Activated naive CD4-positive, alpha-beta T cell treated with anti-CD3 and anti-CD28 coated beads for 36 hours (primary cell): ENCODE measurements at regions of chr5 and their contacts with region 1.

Region 1: GRCh38 chr5:59238126-59238902 is 655.2 kb downstream of the PDE4D start:
- DNase-seq: peak; percentile 35
- H3K4me3 Mint-ChIP-seq: no peak overlapping the region
- H3K27ac Mint-ChIP-seq: no peak overlapping the region
- H3K4me1 Mint-ChIP-seq: peaks cover 22% of the 10 kb centered on the region
- H3K27me3 Mint-ChIP-seq: peaks cover 38% of the 10 kb centered on the region

Region 2: GRCh38 chr5:57327561-57328394 is 1910.5 kb before region 1 on chr5:
- CTCF ChIA-PET with region 1: no interaction called
- intact Hi-C with region 1: loop called (anchors 5 kb)
- DNase-seq: peak; percentile 6
- H3K4me3 Mint-ChIP-seq: no peak overlapping the region
- H3K27ac Mint-ChIP-seq: no peak overlapping the region
- H3K4me1 Mint-ChIP-seq: peaks cover 23% of the 10 kb centered on the region
- H3K27me3 Mint-ChIP-seq: no peaks in the 10 kb centered on the region

Region 3: GRCh38 chr5:58972301-58972700 is 266.0 kb before region 1 on chr5:
- CTCF ChIA-PET with region 1: no interaction called
- intact Hi-C with region 1: loop called (anchors 1 kb)
- DNase-seq: no peak
- H3K4me3 Mint-ChIP-seq: no peak overlapping the region
- H3K27ac Mint-ChIP-seq: no peak overlapping the region
- H3K4me1 Mint-ChIP-seq: peaks cover 15% of the 10 kb centered on the region
- H3K27me3 Mint-ChIP-seq: no peaks in the 10 kb centered on the region

Region 4: DNA sequence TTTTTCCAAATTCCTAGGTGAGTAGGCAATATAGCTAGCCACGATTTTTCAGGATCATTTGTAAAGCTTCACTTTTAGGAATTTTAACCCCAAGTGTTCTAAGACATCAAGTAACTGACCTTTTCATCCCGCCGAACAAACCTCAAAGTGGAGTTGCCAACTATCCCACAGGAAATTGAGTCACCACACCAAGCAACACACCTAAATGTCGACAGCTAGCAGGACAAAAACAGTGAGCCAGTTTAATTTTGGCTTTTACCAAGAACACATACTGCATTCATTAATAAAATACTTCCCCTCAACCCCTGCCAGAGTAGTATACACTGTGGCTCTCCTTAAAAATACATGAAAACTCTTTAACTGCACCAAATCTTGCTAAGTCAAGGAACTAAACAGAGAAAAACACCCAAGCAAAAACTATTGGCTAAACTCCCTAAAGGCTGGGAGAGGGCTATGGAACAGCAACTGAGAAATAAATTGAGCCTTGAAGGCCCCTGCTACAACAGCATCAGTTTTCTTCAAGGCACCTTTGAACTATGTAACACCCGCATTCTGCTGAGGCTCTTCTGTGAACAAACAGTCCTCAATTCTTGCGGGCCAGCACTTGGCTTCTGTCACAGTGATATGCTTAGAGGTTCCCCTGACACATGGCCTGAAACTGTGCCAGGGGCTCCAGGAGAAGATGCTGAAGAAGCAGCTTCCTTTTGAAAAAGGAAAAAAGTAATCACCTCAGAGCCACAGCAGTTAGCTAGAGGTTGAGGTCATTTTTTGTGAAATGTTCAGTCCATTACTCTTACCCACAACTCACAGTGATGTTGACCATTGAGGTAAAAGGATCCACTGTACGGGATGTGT is 195.9 kb before region 1 on chr5:
- CTCF ChIA-PET with region 1: no interaction called
- intact Hi-C with region 1: no loop called
- DNase-seq: peak; percentile 19
- H3K4me3 Mint-ChIP-seq: no peak overlapping the region
- H3K27ac Mint-ChIP-seq: peak overlapping the region; percentile 1
- H3K4me1 Mint-ChIP-seq: peaks cover 27% of the 10 kb centered on the region
- H3K27me3 Mint-ChIP-seq: no peaks in the 10 kb centered on the region

Region 5: GRCh38 chr5:59099270-59099994 is 138.9 kb before region 1 on chr5:
- CTCF ChIA-PET with region 1: no interaction called
- intact Hi-C with region 1: loop called (anchors 1 kb)
- DNase-seq: peak; percentile 68
- H3K4me3 Mint-ChIP-seq: no peak overlapping the region
- H3K27ac Mint-ChIP-seq: peak overlapping the region; percentile 20
- H3K4me1 Mint-ChIP-seq: peaks cover 32% of the 10 kb centered on the region
- H3K27me3 Mint-ChIP-seq: no peaks in the 10 kb centered on the region

Region 6: GRCh38 chr5:59367791-59368394 is 129.6 kb after region 1 on chr5:
- CTCF ChIA-PET with region 1: interaction called, 4 read pairs
- intact Hi-C with region 1: loop called (anchors 1 kb)
- DNase-seq: peak; percentile 73
- H3K4me3 Mint-ChIP-seq: no peak overlapping the region
- H3K27ac Mint-ChIP-seq: no peak overlapping the region
- H3K4me1 Mint-ChIP-seq: peaks cover 5% of the 10 kb centered on the region
- H3K27me3 Mint-ChIP-seq: peaks cover 3% of the 10 kb centered on the region

Region 7: DNA sequence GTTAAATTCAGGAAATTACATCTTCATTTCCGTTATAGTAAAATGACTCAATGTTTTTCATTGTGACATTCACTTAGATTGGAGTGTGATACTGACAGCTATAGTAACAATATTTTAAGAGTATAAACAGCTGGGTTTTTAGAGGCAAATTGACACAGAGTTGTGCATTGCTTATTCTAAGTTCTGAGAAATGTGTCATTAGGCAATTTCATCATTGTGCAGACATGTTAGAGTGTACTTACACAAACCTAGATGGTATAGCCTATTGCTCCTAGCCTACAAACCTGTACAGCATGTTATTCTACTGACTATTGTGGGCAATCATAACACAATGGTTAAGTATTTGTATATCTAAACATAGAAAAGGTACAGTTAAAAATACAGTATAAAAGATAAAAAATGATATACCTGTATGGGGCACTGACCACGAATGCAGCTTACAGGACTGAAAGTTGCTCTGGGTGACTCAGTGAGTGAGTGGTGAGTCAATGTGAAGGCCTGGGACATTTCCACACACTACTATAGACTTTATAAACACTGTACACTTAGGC is 522.6 kb after region 1 on chr5:
- CTCF ChIA-PET with region 1: no interaction called
- intact Hi-C with region 1: loop called (anchors 5 kb)
- DNase-seq: peak; percentile 49
- H3K4me3 Mint-ChIP-seq: no peak overlapping the region
- H3K27ac Mint-ChIP-seq: no peak overlapping the region
- H3K4me1 Mint-ChIP-seq: peaks cover 6% of the 10 kb centered on the region
- H3K27me3 Mint-ChIP-seq: peaks cover 6% of the 10 kb centered on the region